Mucosa of descending colon (tissue), 3 donors: ENCODE measurements at regions of chr19 and their contacts with region 1.

Region 1: DNA sequence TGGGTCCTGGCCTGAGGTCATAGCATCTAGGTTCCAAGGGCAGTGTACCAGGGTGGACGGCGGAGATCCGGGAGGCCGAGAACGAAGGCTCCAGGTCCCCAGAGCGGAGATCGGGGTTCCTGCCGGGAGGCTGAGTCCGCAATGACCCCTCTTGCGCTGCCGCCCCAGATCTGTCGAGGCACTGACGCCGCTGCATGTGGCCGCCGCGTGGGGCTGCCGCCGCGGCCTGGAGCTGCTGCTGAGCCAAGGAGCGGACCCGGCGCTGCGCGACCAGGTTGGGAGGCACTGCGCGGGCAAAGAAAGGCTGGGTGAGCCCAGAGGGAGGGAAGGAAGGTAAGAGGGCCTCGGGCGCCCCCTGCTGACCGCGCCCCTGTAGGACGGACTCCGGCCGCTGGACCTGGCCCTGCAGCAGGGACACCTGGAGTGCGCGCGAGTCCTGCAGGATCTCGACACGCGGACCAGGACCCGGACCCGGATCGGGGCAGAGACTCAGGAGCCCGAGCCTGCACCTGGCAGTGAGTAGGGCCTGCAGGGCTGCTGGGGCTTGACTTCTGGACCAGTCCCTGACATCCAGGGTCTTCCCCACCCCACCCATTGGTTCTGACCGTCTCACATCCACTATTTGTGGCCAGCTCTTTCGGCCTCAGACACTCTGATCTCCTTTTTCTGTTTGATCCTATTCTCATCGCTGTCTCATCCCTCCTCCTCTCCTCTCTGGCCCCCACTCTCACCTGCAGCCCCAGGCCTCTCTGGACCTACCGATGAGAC is 971 bp downstream of the ANKLE1 start:
- DNase-seq: peak; percentile 87 to 94 (median 90)
- ATAC-seq: peak; percentile 99
- H3K4me3 ChIP-seq: no peak overlapping the region
- H3K4me1 ChIP-seq: peaks cover 15% of the 10 kb centered on the region
- CTCF ChIP-seq: peak; percentile 91

Region 2: GRCh38 chr19:17069218-17069617 is 213.5 kb before region 1 on chr19:
- intact Hi-C with region 1: loop called (anchors 5 kb)
- DNase-seq: no peak
- ATAC-seq: no peak
- H3K4me3 ChIP-seq: no peak overlapping the region
- H3K4me1 ChIP-seq: peaks cover 9% of the 10 kb centered on the region
- CTCF ChIP-seq: no peak

Region 3: GRCh38 chr19:17201913-17202648 is 80.6 kb before region 1 on chr19:
- intact Hi-C with region 1: loop called in 1 of 2 experiments (anchors 5 kb)
- DNase-seq: no peak
- ATAC-seq: peak; percentile 36
- H3K4me3 ChIP-seq: no peak overlapping the region
- H3K4me1 ChIP-seq: no peaks in the 10 kb centered on the region
- CTCF ChIP-seq: no peak

Region 4: GRCh38 chr19:17522988-17523872 is 240.6 kb after region 1 on chr19:
- intact Hi-C with region 1: no loop called
- DNase-seq: peak; percentile 58 to 83 (median 62)
- ATAC-seq: peak; percentile 88
- H3K4me3 ChIP-seq: no peak overlapping the region
- H3K4me1 ChIP-seq: no peaks in the 10 kb centered on the region
- CTCF ChIP-seq: no peak